IMR-90 (cell line): ENCODE measurements at regions of chr13 and their contacts with region 1.

Region 1: DNA sequence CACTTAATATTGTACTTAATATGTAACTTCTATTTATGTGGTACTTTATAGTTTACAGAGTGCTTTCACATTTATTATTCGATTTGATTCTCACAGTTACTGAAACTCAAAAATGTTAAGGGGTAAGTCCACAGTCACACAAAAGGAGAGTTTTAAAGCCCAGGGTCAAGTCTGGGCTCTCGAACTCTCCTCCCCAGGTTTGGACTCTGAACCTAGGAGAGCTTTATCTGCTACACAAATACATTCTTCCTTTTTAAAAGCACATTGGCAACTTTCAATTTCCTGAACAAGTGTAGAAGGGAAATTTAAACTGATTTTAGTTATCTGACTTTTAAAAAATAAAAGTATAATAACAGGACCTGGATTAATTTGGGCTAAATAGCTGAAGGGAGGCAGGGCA is 139.2 kb downstream of the ZAR1L start:
- DNase-seq: no peak
- ATAC-seq: no peak
- H3K4me3 ChIP-seq: no peak overlapping the region
- H3K27ac ChIP-seq: no peak overlapping the region
- H3K4me1 ChIP-seq: no peaks in the 10 kb centered on the region
- H3K27me3 ChIP-seq: no peaks in the 10 kb centered on the region
- CTCF ChIP-seq: no peak
- POLR2A ChIP-seq: no peak
- RAD21 ChIP-seq: no peak

Region 2: GRCh38 chr13:32086366-32086765 is 89.6 kb before region 1 on chr13:
- CTCF ChIA-PET with region 1: no interaction called
- POLR2A ChIA-PET with region 1: interaction called, 13 read pairs
- dilution Hi-C with region 1: no loop called
- in situ Hi-C with region 1: no loop called
- intact Hi-C with region 1: no loop called
- DNase-seq: peak; percentile 31
- ATAC-seq: no peak
- H3K4me3 ChIP-seq: no peak overlapping the region
- H3K27ac ChIP-seq: no peak overlapping the region
- H3K4me1 ChIP-seq: peaks cover 9% of the 10 kb centered on the region
- H3K27me3 ChIP-seq: no peaks in the 10 kb centered on the region
- CTCF ChIP-seq: no peak
- POLR2A ChIP-seq: no peak
- RAD21 ChIP-seq: no peak